ENCODE measurements at regions of chr20 and their contacts with region 1.

Region 1: DNA sequence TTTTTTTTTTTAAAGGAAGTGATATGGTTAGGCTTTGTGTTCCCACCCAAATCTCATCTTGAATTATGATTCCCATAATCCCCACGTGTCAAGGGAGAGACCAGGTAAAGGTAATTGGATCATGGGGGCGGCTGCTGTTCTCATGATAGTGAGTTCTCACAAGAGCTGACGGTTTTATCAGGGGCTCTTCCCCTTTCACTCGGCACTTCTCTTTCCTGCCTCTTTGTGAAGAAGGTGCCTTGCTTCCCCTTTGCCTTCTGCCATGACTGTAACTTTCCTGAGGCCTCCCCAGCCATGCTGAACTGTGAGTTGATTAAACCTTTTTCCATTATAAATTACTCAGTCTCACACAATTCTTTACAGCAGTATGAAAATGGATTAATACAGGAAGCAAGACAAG is 64.3 kb downstream of the ZFP64 start:
- DNase-seq: no peak
- CTCF ChIP-seq: no peak

Region 2: DNA sequence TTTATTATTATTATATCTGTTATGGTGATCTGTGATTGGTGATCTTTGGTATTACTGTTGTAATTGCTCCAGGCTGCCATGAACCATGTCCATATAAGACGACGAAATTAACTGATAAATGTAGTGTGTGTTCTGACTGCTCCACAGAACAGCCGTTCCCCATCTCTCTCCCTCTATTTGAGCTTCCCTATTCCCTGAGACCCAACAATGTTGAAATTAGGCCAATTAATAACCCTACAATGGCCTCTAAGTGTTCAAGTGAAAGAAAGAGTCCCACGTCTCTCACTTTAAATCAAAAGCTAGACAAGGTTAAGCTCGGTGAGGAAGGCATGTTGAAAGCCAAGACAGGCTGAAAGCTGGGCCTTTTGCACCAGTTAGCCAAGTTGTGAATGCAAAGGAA is 12.7 kb after region 1 on chr20:
- CTCF ChIA-PET with region 1: interaction called, 19 read pairs
- POLR2A ChIA-PET with region 1: no interaction called
- DNase-seq: no peak
- CTCF ChIP-seq: no peak

Region 3: DNA sequence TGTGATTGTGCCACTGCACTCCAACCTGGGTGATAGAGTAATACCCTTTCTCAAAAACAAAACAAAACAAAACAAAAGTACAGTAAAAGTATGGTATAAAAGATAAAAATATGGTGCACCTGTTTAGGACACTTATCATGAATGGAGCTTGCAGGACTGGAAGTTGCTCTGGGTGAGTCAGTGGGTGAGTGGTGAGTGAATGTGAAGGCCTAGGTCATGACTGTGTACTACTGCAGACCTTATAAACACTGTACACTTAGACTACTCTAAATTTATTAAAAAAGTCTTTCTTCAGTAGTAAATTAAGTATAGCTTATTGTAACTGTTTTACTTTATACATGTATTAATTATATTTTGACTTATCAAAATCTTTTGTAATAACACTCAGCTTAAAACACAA is 18.3 kb after region 1 on chr20:
- CTCF ChIA-PET with region 1: interaction called, 19 read pairs
- POLR2A ChIA-PET with region 1: no interaction called
- DNase-seq: no peak
- CTCF ChIP-seq: no peak

Region 4: DNA sequence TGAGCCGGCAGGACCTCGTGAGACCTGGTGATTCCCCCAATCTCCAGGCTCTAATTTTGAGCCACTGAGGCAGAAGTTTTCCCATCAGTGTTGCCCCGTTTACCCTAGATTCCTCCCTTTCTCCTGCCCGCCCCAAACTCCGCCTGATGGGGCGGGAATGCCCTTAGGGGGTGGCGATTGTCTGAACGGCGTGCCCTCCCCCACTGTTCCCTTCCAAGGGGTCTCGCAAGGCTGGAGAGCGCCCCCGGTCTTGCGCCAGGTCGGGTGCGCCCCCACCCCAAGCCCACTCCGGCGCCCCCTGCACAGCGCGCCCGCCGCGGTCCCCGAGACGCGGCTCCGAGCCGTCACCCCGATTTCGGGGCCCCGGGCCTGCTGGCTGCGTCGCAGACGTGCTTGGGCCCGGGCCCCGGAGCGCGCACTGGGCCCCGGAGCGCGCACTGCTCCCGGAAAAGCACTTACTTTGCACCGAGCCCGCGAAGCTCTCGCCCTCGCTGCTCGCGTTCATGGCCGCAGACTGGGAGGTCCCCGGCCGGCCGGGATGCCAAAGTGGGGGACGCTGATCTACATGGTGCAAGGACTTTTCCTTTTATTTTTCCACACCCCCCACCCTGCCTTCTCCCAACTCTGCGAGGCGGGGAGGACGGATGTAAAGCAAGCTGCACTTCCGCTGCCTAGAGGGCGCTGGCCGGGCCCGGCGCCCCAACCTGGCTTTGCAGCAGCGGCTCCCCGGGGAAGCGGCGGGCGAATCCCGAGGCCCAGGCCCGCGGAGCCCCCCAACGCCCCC is 64.0 kb after region 1 on chr20 and contains the start of gene ZFP64:
- CTCF ChIA-PET with region 1: interaction called, 10 read pairs
- POLR2A ChIA-PET with region 1: no interaction called
- DNase-seq: peak; percentile 87
- CTCF ChIP-seq: peak; percentile 89

Region 5: DNA sequence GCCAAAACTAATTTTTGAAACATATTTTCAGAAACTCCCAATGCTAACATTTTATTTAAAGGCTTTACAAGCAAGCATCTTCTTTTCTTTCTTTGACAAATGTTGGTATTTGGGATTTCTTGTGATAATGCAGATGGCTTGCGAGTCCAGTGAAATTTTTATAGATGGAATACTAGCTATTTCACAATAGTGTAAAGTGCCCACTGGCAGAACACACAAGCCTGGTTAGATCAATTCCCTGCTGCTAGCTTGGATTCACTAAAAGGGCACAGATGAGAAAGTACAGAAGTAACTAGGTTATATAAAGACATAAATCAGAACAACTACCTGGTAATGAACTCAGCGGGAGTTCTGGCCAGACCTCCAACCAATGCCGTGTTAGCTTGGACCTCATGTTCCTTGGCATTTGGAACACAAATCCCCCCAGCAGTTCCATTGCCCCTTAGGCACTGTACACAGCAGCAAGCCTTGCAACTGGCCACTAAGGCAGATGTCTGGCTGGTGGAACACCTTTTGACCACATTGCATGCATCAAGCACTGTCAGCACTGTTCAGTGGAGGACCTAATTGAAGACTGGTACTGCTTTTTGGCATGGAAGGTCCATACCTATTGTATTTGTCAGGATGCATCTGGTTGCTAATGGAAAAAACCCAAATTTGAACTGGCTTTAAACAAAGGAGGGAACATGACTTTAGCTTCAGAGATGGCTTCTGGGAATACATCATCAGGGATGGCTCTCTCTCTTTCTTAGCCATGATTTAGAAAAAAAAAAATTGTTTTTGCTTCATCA is 79.9 kb after region 1 on chr20:
- CTCF ChIA-PET with region 1: interaction called, 11 read pairs
- POLR2A ChIA-PET with region 1: no interaction called
- DNase-seq: no peak
- CTCF ChIP-seq: no peak

Region 6: DNA sequence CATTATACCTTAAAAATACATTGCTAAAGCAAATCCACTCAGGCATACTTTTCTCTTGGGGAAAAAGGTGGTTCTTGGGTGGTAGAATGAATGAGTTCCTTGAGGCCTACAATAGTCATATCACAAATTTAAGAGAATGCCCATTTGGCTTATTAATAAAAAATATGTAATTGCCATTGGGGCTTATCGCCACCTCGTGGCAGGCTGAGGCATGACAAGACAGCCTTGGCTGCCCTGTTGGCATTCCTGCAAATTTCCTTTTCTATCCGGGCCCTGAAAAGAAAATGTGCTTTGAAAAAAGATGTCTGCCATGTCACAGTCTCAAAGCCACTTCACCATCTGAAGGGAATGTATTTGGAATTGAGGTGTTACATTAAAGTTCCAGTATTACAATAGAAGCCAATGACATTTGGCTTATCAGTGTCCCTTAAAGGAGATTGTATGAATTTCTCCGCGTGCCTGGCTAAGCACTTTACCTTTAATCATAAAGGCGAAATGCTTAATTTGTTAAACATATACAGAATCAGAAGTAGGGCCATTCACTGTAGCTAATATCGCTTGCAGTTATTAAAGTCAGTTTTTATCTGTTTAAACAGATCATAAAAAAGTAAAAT is 252.5 kb after region 1 on chr20:
- CTCF ChIA-PET with region 1: interaction called, 21 read pairs
- POLR2A ChIA-PET with region 1: no interaction called
- DNase-seq: peak; percentile 34
- CTCF ChIP-seq: peak; percentile 89